ENCODE measurements at regions of chr11 and their contacts with region 1.

Region 1: DNA sequence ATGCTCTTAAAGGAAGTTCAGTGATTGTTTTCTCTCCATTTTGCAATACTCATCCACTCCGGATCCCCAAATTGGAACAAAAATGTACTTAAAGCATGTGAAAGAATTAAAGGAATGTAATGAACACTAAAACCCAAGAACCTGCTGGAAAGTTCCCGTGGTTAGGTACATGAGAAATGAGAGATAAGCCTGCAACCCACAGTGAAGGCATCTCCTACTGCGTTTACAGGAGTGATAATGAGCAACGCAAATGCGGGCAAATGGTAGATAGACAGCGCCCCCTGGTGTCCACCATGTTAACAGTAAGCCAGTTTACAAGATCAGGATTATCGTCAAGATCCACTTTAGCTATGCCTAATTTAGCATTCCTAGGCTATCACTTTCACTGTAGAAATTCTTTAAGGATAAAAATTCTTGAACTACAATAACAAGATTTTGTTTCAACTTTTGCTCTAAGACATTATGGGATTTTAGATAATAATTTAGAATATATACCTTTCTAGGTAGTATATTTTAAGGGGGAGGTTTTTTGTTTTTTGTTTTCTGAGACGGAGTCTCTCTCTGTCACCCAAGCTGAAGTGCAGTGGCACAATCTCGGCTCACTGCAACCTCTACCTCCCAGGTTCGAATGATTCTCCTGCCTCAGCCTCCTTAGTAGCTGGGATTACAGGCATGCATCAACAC is 29.9 kb downstream of the ALG9 start:
- DNase-seq: peak; percentile 92
- H3K4me3 ChIP-seq: no peak overlapping the region
- H3K27ac ChIP-seq: no peak overlapping the region
- H3K4me1 ChIP-seq: peaks cover 0 to 43% (median 16%) of the 10 kb centered on the region in 6 donors
- H3K27me3 ChIP-seq: no peaks in the 10 kb centered on the region
- CTCF ChIP-seq: peak; percentile 58 to 92 (median 83)
- POLR2A ChIP-seq: no peak

Region 2: GRCh38 chr11:111565114-111565720 is 276.3 kb before region 1 on chr11:
- intact Hi-C with region 1: loop called (anchors 5 kb)
- DNase-seq: no peak
- H3K4me3 ChIP-seq: no peak overlapping the region
- H3K27ac ChIP-seq: no peak overlapping the region
- H3K4me1 ChIP-seq: peaks cover 0 to 12% (median 5%) of the 10 kb centered on the region in 6 donors
- H3K27me3 ChIP-seq: no peaks in the 10 kb centered on the region
- CTCF ChIP-seq: peak; percentile 41 to 93 (median 86)
- POLR2A ChIP-seq: no peak

Region 3: DNA sequence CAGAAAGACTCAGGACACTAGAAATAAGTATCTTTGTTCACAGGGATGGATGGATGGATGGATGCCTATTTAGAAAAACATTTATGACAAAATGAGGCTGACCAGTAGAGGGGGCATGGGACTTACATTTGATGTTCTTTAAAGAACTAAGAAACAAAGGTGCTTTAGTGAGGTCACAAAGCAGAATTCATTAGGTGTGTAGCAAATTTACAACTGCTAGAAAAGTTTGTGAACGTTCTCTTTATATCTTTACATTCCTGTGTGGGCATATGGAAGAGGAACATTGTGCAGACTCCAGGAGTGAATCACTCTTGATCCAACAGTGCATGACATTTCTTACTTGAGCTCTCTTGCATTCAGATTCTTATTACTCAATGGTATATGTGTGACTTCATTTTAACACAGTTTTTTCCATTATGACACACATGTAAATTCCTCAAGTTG is 255.1 kb before region 1 on chr11:
- intact Hi-C with region 1: loop called (anchors 5 kb)
- DNase-seq: no peak
- H3K4me3 ChIP-seq: no peak overlapping the region
- H3K27ac ChIP-seq: no peak overlapping the region
- H3K4me1 ChIP-seq: no peaks in the 10 kb centered on the region
- H3K27me3 ChIP-seq: no peaks in the 10 kb centered on the region
- CTCF ChIP-seq: peak in 9 of 11 experiments; percentile 31 to 57 (median 49)
- POLR2A ChIP-seq: no peak

Region 4: GRCh38 chr11:111745719-111746504 is 95.6 kb before region 1 on chr11:
- intact Hi-C with region 1: no loop called
- DNase-seq: no peak
- H3K4me3 ChIP-seq: no peak overlapping the region
- H3K27ac ChIP-seq: peak overlapping the region in 5 of 8 donors; percentile 6 to 33 (median 31)
- H3K4me1 ChIP-seq: peaks cover 0 to 11% (median 2%) of the 10 kb centered on the region in 6 donors
- H3K27me3 ChIP-seq: no peaks in the 10 kb centered on the region
- CTCF ChIP-seq: no peak
- POLR2A ChIP-seq: no peak

Region 5: DNA sequence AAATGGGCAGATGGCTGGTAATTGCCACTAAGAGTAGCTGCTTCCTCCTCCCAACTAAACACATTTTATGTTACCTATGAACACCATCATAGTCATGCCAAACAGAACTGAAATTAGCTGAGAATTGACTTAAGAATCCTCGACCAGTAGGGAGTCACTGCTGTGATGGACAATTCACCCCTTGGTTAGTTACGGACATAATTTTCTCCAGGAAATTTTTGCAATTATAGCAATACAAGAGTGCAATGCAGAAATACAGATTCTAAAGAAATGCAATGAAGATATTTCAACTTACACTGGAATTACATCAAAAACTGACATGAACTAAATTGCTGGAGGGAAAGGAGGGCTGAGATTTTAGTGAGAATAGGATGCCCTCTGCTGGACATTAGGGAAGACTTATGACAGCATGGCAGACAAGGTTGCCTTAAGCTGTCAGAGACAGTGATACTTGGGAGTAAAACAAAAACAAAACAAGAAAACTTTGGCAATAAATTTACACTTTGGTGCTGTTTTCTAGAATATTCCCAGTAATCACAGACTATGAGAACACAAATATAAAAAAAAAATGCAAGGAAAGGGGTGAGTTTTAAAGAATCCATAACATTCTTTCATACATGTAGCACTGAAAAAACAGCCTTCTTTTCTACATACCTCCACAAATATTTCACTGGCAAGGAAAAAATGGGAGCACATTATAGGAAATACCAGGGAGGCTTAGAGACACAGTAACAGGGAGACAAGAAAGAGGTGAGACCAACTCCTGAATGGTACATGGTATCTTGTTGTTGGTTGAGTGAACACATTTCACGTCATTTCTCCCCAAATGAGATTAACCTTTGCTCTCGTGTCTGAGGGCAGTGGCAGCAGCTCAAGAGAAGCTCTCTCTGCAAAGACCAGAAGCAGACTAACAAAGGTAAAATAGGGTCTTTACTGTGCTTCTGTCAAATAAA is 64.1 kb before region 1 on chr11:
- intact Hi-C with region 1: loop called (anchors 10 kb)
- DNase-seq: no peak
- H3K4me3 ChIP-seq: no peak overlapping the region
- H3K27ac ChIP-seq: peak overlapping the region in 4 of 8 donors; percentile 30 to 69 (median 34)
- H3K4me1 ChIP-seq: peaks cover 0 to 22% (median 12%) of the 10 kb centered on the region in 6 donors
- H3K27me3 ChIP-seq: no peaks in the 10 kb centered on the region
- CTCF ChIP-seq: peak; percentile 65 to 89 (median 82)
- POLR2A ChIP-seq: no peak

Region 6: DNA sequence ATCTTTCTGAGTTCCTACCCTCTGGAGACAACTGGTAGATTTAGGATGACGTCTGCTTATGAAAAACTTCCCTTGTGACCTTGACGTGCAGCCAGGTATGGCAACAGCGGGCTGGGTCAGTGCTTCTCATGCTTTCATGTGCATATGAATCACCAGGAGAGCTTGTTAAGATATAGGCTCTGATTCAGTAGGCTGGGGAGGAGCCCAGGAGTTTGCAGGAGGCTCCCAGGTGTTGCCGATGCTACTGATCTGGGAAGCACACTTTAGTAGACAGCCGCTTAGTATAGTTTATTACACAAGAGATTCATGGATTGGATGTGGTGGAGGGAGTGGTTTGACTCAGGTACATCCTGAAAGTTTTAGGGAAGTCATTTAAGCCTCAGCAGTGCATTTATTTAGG is 119.4 kb after region 1 on chr11:
- intact Hi-C with region 1: no loop called
- DNase-seq: no peak
- H3K4me3 ChIP-seq: no peak overlapping the region
- H3K27ac ChIP-seq: no peak overlapping the region
- H3K4me1 ChIP-seq: no peaks in the 10 kb centered on the region
- H3K27me3 ChIP-seq: no peaks in the 10 kb centered on the region
- CTCF ChIP-seq: no peak
- POLR2A ChIP-seq: no peak